CD8-positive, alpha-beta T cell (primary cell): ENCODE measurements at regions of chr13 and their contacts with region 1.

Region 1: GRCh38 chr13:110925023-110925612 is 10.2 kb upstream of the ANKRD10 start:
- DNase-seq: peak in 4 of 9 experiments; percentile 12 to 62 (median 36)
- ATAC-seq: no peak
- H3K4me3 ChIP-seq: no peak overlapping the region
- H3K4me3 Mint-ChIP-seq: no peak overlapping the region
- H3K27ac ChIP-seq: no peak overlapping the region
- H3K27ac Mint-ChIP-seq: no peak overlapping the region
- H3K4me1 ChIP-seq: no peaks in the 10 kb centered on the region
- H3K4me1 Mint-ChIP-seq: peaks cover 6% of the 10 kb centered on the region
- H3K27me3 ChIP-seq: peaks cover 5 to 8% of the 10 kb centered on the region in 2 experiments
- H3K27me3 Mint-ChIP-seq: peaks cover 60% of the 10 kb centered on the region
- CTCF ChIP-seq: no peak

Region 2: GRCh38 chr13:109584905-109585304 is 1340.2 kb before region 1 on chr13:
- CTCF ChIA-PET with region 1: no interaction called
- POLR2A ChIA-PET with region 1: no interaction called
- intact Hi-C with region 1: no loop called
- DNase-seq: no peak
- ATAC-seq: no peak
- H3K4me3 ChIP-seq: no peak overlapping the region
- H3K4me3 Mint-ChIP-seq: no peak overlapping the region
- H3K27ac ChIP-seq: no peak overlapping the region
- H3K27ac Mint-ChIP-seq: no peak overlapping the region
- H3K4me1 ChIP-seq: no peaks in the 10 kb centered on the region
- H3K4me1 Mint-ChIP-seq: no peaks in the 10 kb centered on the region
- H3K27me3 ChIP-seq: no peaks in the 10 kb centered on the region
- H3K27me3 Mint-ChIP-seq: peaks cover 8% of the 10 kb centered on the region
- CTCF ChIP-seq: no peak

Region 3: GRCh38 chr13:110225609-110226562 is 699.2 kb before region 1 on chr13:
- CTCF ChIA-PET with region 1: no interaction called
- POLR2A ChIA-PET with region 1: no interaction called
- intact Hi-C with region 1: loop called in 1 of 2 experiments (anchors 10 kb)
- DNase-seq: no peak
- ATAC-seq: no peak
- H3K4me3 ChIP-seq: no peak overlapping the region
- H3K4me3 Mint-ChIP-seq: no peak overlapping the region
- H3K27ac ChIP-seq: no peak overlapping the region
- H3K27ac Mint-ChIP-seq: no peak overlapping the region
- H3K4me1 ChIP-seq: no peaks in the 10 kb centered on the region
- H3K4me1 Mint-ChIP-seq: no peaks in the 10 kb centered on the region
- H3K27me3 ChIP-seq: no peaks in the 10 kb centered on the region
- H3K27me3 Mint-ChIP-seq: peaks cover 5% of the 10 kb centered on the region
- CTCF ChIP-seq: no peak

Region 4: DNA sequence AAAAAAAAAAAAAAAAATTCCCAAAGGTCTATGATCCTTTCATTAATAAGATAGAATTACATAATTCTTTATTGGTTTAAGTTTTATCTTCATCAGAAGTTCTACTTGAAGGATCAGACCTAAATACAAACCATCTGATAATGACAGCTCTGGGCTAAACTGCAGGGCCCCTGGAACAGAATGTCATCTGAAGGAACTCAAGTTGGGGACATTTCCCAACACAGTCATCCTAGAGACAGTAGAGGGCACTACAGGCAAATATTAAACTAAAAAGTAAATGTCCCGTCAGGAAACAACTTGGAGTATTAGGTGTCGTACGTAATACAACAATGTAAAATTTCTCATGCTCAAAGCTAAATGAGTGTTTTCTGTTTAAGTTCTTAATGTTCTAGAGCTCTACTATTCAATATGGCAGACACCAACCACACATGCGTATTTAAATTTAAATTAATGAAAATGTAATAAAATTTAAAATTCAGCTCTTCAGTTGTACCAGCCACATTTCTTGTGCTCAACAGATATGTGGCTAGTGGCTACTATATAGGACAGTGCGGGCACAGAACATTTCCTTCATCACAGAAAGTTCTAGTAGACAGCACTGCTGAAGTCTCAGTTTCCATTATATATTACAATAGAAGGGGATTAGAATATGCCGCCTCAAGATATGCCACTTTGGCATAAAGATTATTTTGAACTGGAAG is 331.5 kb before region 1 on chr13:
- CTCF ChIA-PET with region 1: interaction called, 4 read pairs
- POLR2A ChIA-PET with region 1: no interaction called
- intact Hi-C with region 1: loop called in 1 of 2 experiments (anchors 5 kb)
- DNase-seq: peak in 2 of 9 experiments; percentile 47 to 64
- ATAC-seq: peak; percentile 57
- H3K4me3 ChIP-seq: no peak overlapping the region
- H3K4me3 Mint-ChIP-seq: no peak overlapping the region
- H3K27ac ChIP-seq: no peak overlapping the region
- H3K27ac Mint-ChIP-seq: no peak overlapping the region
- H3K4me1 ChIP-seq: no peaks in the 10 kb centered on the region
- H3K4me1 Mint-ChIP-seq: peaks cover 2% of the 10 kb centered on the region
- H3K27me3 ChIP-seq: no peaks in the 10 kb centered on the region
- H3K27me3 Mint-ChIP-seq: no peaks in the 10 kb centered on the region
- CTCF ChIP-seq: no peak